Activated B cell treated with CpG ODN at 0.5 μM for 24 hours (primary cell): ENCODE measurements at regions of chr7 and their contacts with region 1.

Region 1: GRCh38 chr7:148940702-148941597 is 56.9 kb upstream of the EZH2 start:
- DNase-seq: peak; percentile 68
- ATAC-seq: peak; percentile 77
- H3K4me3 Mint-ChIP-seq: peak overlapping the region; percentile 97
- H3K27ac Mint-ChIP-seq: peak overlapping the region; percentile 99
- H3K4me1 Mint-ChIP-seq: peaks cover 17% of the 10 kb centered on the region
- H3K27me3 Mint-ChIP-seq: no peaks in the 10 kb centered on the region
- CTCF ChIP-seq: no peak

Region 2: GRCh38 chr7:148809856-148810255 is 131.1 kb before region 1 on chr7:
- CTCF ChIA-PET with region 1: no interaction called
- POLR2A ChIA-PET with region 1: no interaction called
- intact Hi-C with region 1: no loop called
- DNase-seq: no peak
- ATAC-seq: no peak
- H3K4me3 Mint-ChIP-seq: no peak overlapping the region
- H3K27ac Mint-ChIP-seq: peak overlapping the region; percentile 35
- H3K4me1 Mint-ChIP-seq: peaks cover 16% of the 10 kb centered on the region
- H3K27me3 Mint-ChIP-seq: no peaks in the 10 kb centered on the region
- CTCF ChIP-seq: no peak

Region 3: DNA sequence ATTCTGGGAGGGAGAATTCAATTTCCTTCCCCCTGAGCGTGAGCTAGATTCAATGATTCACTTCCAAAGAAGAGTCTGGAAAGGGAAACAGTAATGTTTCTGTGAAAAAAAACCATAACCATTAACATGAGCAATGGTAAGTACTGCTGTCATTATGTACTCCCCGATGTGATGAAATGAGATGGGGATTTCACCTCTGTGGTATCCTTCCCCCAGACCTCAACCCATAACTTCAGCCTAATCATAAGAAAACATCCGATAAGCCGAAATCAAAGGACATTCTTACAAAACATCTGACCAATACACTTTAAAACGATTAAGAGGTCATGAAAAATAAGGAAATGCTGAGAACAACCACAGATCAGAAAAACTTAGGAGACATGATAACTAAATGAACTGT is 84.1 kb before region 1 on chr7:
- CTCF ChIA-PET with region 1: interaction called, 14 read pairs
- POLR2A ChIA-PET with region 1: interaction called, 4 read pairs
- intact Hi-C with region 1: loop called (anchors 1 kb)
- DNase-seq: no peak
- ATAC-seq: no peak
- H3K4me3 Mint-ChIP-seq: no peak overlapping the region
- H3K27ac Mint-ChIP-seq: no peak overlapping the region
- H3K4me1 Mint-ChIP-seq: peaks cover 11% of the 10 kb centered on the region
- H3K27me3 Mint-ChIP-seq: no peaks in the 10 kb centered on the region
- CTCF ChIP-seq: no peak

Region 4: DNA sequence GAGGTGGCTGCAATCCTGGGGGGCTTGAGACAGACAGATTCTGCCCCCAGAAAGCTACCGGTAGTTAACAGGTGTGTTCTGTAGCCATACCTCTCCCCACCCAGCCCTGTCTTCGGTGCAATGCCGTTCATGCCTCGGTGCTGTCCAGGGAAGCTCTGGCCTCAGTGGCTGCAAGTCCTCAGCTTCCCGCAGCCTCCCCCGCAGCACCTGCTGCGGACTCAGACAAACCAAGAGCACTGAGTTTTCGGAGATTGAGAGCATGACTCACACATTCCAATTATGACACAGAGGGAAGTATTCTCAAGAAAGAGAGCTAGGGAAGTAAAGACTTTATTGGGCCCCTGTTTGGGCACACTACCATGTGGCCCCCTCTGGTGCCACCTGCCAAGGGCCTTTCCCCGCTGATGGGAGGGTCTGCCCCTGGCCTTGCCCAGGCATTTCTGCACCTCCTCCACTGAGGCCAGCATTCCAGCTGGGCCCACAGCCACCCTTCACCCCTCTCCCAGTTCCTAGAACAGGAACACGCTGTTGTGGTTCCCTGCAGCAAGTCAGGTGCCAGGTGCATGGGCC is 26.7 kb before region 1 on chr7:
- CTCF ChIA-PET with region 1: interaction called, 3 read pairs
- POLR2A ChIA-PET with region 1: interaction called, 15 read pairs
- intact Hi-C with region 1: loop called (anchors 1 kb)
- DNase-seq: no peak
- ATAC-seq: peak; percentile 38
- H3K4me3 Mint-ChIP-seq: peak overlapping the region; percentile 57
- H3K27ac Mint-ChIP-seq: peak overlapping the region; percentile 75
- H3K4me1 Mint-ChIP-seq: peaks cover 42% of the 10 kb centered on the region
- H3K27me3 Mint-ChIP-seq: no peaks in the 10 kb centered on the region
- CTCF ChIP-seq: no peak

Region 5: DNA sequence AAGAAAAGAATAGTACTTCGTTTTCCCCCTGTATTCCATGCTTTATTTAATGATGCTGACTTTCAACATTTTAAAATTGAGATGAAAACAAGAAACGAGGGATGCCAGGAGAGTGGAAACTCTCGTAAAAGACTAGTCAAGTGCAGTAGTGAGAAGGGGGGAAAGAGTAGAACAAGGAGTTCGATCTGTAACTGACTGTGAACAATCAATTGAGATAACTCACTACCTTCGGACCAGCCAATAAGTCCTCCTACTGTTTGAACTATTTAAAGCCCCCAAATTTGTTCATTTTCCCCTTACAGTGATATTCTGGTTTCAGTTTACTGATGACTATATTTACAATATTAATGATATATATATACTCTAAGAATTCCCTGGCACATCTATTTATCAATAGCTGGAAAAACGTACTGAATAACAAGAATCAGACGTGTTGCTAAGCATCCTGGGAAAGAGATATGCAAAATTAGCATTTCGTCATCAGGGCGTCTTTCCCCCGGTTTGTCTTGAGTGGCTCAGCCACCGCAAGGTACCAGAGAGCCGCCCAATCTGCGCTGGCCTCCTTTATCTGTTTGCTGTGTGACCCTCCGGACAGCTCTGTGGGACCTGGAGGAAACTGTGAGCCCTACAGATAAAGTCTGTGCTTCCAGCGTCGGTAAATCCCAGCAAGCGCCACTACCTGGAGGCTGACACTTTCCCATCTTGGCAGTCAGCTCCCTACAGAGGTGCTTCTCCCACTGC is 46.2 kb after region 1 on chr7:
- CTCF ChIA-PET with region 1: interaction called, 3 read pairs
- POLR2A ChIA-PET with region 1: interaction called, 10 read pairs
- intact Hi-C with region 1: loop called (anchors 1 kb)
- DNase-seq: peak; percentile 60
- ATAC-seq: peak; percentile 85
- H3K4me3 Mint-ChIP-seq: peak overlapping the region; percentile 96
- H3K27ac Mint-ChIP-seq: peak overlapping the region; percentile 93
- H3K4me1 Mint-ChIP-seq: peaks cover 50% of the 10 kb centered on the region
- H3K27me3 Mint-ChIP-seq: peaks cover 2% of the 10 kb centered on the region
- CTCF ChIP-seq: no peak